IMR-90 (cell line): ENCODE measurements at regions of chr3 and their contacts with region 1.

Region 1: DNA sequence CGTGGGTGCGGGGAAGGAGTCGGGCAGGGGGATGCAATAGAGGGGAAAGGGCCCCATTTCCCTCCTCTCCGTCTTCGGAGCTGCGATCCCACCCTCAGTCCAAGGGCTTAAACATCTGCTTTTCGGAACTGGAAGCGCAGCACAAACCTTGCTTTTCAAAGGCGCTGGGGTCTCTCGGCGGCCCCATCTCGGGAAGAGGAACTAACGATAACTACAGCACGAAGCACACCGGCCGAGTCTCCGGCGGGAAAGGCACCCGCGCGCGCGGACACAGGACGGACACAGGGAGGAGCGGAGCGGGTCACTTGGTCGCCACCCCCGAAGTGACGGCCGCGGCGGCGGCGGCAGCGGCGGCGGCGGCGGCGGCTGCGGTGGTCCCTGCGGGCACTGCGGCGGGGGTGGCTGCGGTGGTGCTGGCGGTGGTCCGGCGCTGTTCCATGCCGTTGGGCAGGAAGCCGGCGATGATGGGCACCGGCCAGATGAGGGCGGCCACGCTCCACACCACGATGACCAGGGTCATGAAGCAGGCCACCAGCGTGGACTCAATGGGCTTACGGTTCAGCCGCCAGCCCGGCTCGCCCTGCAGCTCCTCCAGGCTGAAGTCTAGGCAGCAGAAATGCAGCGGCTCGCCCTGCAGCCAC is 1.1 kb downstream of the TMEM158 start:
- DNase-seq: peak; percentile 78
- ATAC-seq: peak; percentile 64
- H3K4me3 ChIP-seq: peak overlapping the region; percentile 72
- H3K27ac ChIP-seq: peak overlapping the region; percentile 89
- H3K4me1 ChIP-seq: peaks cover 10% of the 10 kb centered on the region
- H3K27me3 ChIP-seq: no peaks in the 10 kb centered on the region
- CTCF ChIP-seq: peak; percentile 73
- POLR2A ChIP-seq: peak; percentile 41; the same call in 1 of the 2 replicates
- RAD21 ChIP-seq: peak; percentile 83

Region 2: DNA sequence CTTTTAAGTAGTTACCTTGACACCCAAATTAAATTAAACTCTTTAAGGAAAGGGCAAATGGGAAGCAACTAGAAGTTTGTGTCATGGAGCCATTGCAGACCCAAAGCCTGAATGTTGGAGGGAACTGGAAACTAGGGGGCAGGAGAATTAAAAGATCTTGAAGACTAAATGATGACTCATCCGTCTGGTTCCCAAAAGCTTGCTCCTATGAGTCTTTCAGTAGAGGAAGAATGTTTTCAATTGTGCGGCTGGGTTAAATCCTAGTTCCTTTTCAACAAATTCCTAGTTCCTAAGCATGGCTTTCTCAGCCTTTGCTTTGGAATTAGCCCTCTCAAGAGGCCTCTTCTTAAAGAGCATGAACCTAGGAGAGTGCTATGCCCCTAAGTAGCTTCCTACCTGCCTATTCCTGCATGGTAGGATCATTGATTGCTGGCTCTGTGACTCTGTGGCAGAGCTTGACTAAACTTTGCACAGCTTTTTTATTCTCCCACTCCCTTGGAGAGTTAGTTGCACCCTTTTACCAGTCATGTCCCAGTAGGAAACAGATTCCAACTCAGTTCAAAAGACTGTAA is 181.1 kb before region 1 on chr3:
- CTCF ChIA-PET with region 1: interaction called, 6 read pairs
- POLR2A ChIA-PET with region 1: interaction called, 3 read pairs
- dilution Hi-C with region 1: no loop called
- in situ Hi-C with region 1: loop called (anchors 5 kb)
- intact Hi-C with region 1: loop called (anchors 1 kb)
- DNase-seq: peak; percentile 94
- ATAC-seq: peak; percentile 75
- H3K4me3 ChIP-seq: no peak overlapping the region
- H3K27ac ChIP-seq: peak overlapping the region; percentile 100
- H3K4me1 ChIP-seq: peaks cover 24% of the 10 kb centered on the region
- H3K27me3 ChIP-seq: no peaks in the 10 kb centered on the region
- CTCF ChIP-seq: peak; percentile 54
- POLR2A ChIP-seq: no peak
- RAD21 ChIP-seq: peak; percentile 56

Region 3: GRCh38 chr3:45123030-45123429 is 101.9 kb before region 1 on chr3:
- CTCF ChIA-PET with region 1: no interaction called
- POLR2A ChIA-PET with region 1: interaction called, 5 read pairs
- dilution Hi-C with region 1: no loop called
- in situ Hi-C with region 1: no loop called
- intact Hi-C with region 1: loop called (anchors 5 kb)
- DNase-seq: peak; percentile 98
- ATAC-seq: peak; percentile 68
- H3K4me3 ChIP-seq: no peak overlapping the region
- H3K27ac ChIP-seq: peak overlapping the region; percentile 95; the same call in 1 of the 2 replicates
- H3K4me1 ChIP-seq: peaks cover 42% of the 10 kb centered on the region
- H3K27me3 ChIP-seq: no peaks in the 10 kb centered on the region
- CTCF ChIP-seq: 0 out of 2 replicates have a peak, but pooled peaks have one; percentile 6
- POLR2A ChIP-seq: no peak; the same call in 1 of the 2 replicates
- RAD21 ChIP-seq: peak; percentile 6; the same call in 1 of the 2 replicates

Region 4: DNA sequence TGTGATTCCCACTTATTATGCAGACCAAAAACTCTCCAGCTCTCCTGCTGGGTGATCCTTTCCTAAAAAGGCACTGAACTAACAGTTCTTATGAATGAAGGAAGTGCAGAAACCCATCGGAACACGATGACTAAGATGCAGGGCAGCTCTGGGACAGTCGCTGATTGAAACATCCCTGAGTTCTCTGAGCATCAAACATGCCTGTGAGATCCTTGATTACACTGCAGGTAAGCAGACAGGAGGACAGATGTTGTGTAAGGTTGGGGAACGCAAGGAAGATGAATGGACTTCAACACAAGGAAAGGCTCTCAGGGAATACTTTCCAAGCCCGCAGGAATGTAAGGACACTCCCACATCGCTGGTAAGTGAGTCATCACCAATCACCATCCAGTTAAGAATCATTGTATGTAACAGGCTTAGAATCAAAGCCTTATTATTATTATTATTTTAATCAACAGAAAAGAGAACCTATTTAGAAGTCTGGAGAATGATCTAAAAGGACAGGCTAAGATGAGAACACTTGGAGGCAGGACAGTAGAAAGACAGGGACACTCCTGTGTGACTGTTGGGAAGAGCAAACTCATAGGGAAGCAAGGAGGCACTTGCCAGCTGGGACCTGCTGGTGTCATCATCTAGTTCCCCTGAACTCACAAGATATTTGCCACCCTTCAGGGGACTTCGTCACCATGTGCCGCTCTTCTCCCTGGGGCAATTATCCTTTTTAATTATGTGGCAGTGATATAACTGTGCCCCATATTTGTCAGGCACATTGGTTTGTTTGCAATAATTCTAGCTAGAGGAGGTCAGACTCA is 24.9 kb before region 1 on chr3:
- CTCF ChIA-PET with region 1: no interaction called
- POLR2A ChIA-PET with region 1: no interaction called
- dilution Hi-C with region 1: no loop called
- in situ Hi-C with region 1: no loop called
- intact Hi-C with region 1: no loop called
- DNase-seq: peak; percentile 92
- ATAC-seq: peak; percentile 84
- H3K4me3 ChIP-seq: no peak overlapping the region
- H3K27ac ChIP-seq: peak overlapping the region; percentile 59
- H3K4me1 ChIP-seq: peaks cover 20% of the 10 kb centered on the region
- H3K27me3 ChIP-seq: no peaks in the 10 kb centered on the region
- CTCF ChIP-seq: no peak
- POLR2A ChIP-seq: no peak
- RAD21 ChIP-seq: no peak

Region 5: GRCh38 chr3:45381168-45381852 is 156.4 kb after region 1 on chr3:
- CTCF ChIA-PET with region 1: no interaction called
- POLR2A ChIA-PET with region 1: no interaction called
- dilution Hi-C with region 1: no loop called
- in situ Hi-C with region 1: no loop called
- intact Hi-C with region 1: no loop called
- DNase-seq: no peak
- ATAC-seq: no peak
- H3K4me3 ChIP-seq: no peak overlapping the region
- H3K27ac ChIP-seq: no peak overlapping the region
- H3K4me1 ChIP-seq: no peaks in the 10 kb centered on the region
- H3K27me3 ChIP-seq: peaks cover 2% of the 10 kb centered on the region; the same call in 1 of the 2 replicates
- CTCF ChIP-seq: no peak
- POLR2A ChIP-seq: no peak
- RAD21 ChIP-seq: no peak

Region 6: GRCh38 chr3:45499529-45499928 is 274.6 kb after region 1 on chr3:
- CTCF ChIA-PET with region 1: interaction called, 3 read pairs
- POLR2A ChIA-PET with region 1: interaction called, 3 read pairs
- dilution Hi-C with region 1: no loop called
- in situ Hi-C with region 1: no loop called
- intact Hi-C with region 1: loop called (anchors 1 kb)
- DNase-seq: peak; percentile 66
- ATAC-seq: peak; percentile 44; the same call in 1 of the 2 replicates
- H3K4me3 ChIP-seq: no peak overlapping the region
- H3K27ac ChIP-seq: no peak overlapping the region
- H3K4me1 ChIP-seq: peaks cover 2% of the 10 kb centered on the region; the same call in 1 of the 2 replicates
- H3K27me3 ChIP-seq: no peaks in the 10 kb centered on the region
- CTCF ChIP-seq: peak; percentile 72
- POLR2A ChIP-seq: no peak
- RAD21 ChIP-seq: peak; percentile 69